A549 (cell line): ENCODE measurements at regions of chr17 and their contacts with region 1.

Region 1: DNA sequence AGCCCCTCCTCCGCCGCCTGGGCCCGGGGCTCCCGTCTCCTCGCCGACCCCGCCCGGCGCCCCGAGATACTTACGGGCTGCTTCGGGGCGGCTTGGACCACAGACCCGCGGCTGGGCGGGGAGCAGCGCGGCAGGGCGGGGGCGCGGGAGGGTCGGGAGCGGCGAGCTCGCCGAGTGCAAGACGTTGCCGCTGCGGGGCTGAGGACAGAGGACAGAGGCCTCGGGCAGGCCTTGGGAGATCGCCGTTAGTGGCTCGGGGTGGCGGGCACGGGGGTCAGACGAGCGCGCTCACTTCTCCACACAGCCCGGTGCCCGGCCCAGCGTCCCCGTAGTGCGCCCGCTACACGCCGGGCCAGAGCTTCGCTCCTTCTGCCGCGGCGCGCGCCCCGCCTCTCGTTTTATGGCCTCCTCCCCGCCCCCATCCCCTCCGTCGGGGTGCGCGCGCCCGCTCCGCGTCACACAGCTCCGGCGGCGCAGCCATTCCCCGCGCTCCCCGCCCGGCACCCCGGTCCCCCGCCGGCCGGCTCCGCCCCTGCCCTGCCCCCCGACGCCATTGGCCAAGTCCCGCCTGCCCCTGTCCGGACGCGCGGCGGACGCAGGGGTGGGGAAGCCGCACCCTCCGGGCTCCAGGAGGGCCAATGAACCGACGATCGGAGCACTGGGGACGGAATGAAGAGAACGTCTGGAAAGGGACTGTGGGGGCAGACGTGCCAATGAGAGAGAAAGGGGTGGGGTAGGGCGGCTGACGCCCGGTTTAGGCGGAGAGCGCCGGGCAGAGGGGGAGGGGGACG is at the start of gene TOB1:
- DNase-seq: peak; percentile 90 to 98
- ATAC-seq: peak; percentile 72 to 86
- H3K4me3 ChIP-seq: peak within 1 kb of the TSS; percentile 92
- H3K27ac ChIP-seq: peak within 1 kb of the TSS; percentile 97 to 98
- H3K4me1 ChIP-seq: peaks cover 36% of the 10 kb centered on the region
- CTCF ChIP-seq: no peak
- EP300 ChIP-seq: 0 out of 5 replicates have a peak, but pooled peaks of 1 of the 2 experiments have one; percentile 36
- POLR2A ChIP-seq: peak; percentile 100
- RAD21 ChIP-seq: peak; percentile 7 to 8; a peak in 3 of 5 replicates
- polyA plus RNA-seq, gene TOB1: 101 and 133 TPM in 2 replicates

Region 2: DNA sequence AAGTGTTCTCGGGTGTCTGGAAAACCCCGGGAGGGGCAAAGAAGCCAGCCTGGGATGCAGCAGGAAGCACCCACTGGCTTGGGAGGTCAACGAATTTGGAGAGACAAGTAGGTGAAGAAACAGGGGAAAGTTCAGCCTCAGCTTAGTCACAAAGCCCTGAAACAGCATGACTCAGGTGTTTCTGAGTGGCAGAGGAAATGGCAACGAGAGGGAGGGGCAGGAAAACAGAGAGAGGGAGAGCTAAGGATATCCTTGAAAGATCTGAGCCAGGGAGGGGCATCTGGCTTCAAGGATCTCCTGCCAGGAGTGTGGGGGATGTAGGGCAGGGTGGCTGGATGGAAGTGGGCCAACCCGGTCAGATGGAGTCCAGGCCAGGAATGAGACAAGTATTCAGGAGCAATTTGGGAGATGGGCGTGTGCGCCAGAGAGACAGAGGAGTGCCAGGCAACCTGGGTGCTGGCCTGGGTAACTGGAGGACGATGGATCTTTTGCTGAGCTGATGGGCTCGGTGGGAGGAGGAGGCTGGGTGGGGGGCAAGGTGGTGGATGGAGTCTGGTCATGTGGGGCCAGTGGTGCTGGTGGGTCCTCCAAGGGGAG is 204.3 kb before region 1 on chr17:
- CTCF ChIA-PET with region 1: no interaction called
- POLR2A ChIA-PET with region 1: interaction called, 10 read pairs
- DNase-seq: peak; percentile 100
- ATAC-seq: peak; percentile 61 to 75
- H3K4me3 ChIP-seq: 0 out of 3 replicates have a peak overlapping the region, but pooled peaks have one; percentile 8
- H3K27ac ChIP-seq: peak overlapping the region; percentile 98
- H3K4me1 ChIP-seq: peaks cover 97% of the 10 kb centered on the region
- CTCF ChIP-seq: no peak
- EP300 ChIP-seq: peak; percentile 96 to 98
- POLR2A ChIP-seq: no peak
- RAD21 ChIP-seq: peak; percentile 21 to 65; a peak in 4 of 5 replicates

Region 3: GRCh38 chr17:50793007-50793406 is 73.2 kb before region 1 on chr17:
- CTCF ChIA-PET with region 1: no interaction called
- POLR2A ChIA-PET with region 1: no interaction called
- DNase-seq: no peak
- ATAC-seq: no peak
- H3K4me3 ChIP-seq: no peak overlapping the region
- H3K27ac ChIP-seq: no peak overlapping the region
- H3K4me1 ChIP-seq: no peaks in the 10 kb centered on the region
- CTCF ChIP-seq: no peak
- EP300 ChIP-seq: no peak
- POLR2A ChIP-seq: no peak
- RAD21 ChIP-seq: no peak

Region 4: GRCh38 chr17:50830994-50831393 is 35.2 kb before region 1 on chr17:
- CTCF ChIA-PET with region 1: no interaction called
- POLR2A ChIA-PET with region 1: no interaction called
- DNase-seq: no peak
- ATAC-seq: no peak
- H3K4me3 ChIP-seq: no peak overlapping the region
- H3K27ac ChIP-seq: no peak overlapping the region
- H3K4me1 ChIP-seq: no peaks in the 10 kb centered on the region
- CTCF ChIP-seq: no peak
- EP300 ChIP-seq: no peak
- POLR2A ChIP-seq: no peak
- RAD21 ChIP-seq: no peak

Region 5: DNA sequence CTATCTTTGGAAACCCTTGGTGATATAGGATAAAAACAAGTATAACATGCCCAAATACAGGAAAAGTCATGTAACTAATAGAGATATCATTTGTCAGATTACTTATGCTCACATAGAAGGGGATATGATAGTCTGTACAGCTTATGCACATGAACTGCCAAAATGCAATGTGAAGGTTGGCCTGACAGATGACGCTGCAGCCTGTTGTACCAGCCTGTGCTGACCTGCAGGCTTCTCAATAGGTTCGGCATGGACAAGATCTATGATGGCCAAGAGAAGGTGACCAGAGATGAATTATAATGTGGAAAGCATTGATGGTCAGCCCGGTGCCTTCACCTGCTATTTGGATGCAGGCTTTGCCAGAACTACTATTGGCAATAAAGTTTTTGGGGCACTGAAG is 18.1 kb before region 1 on chr17:
- CTCF ChIA-PET with region 1: interaction called, 197 read pairs
- POLR2A ChIA-PET with region 1: interaction called, 58 read pairs
- DNase-seq: no peak
- ATAC-seq: no peak
- H3K4me3 ChIP-seq: no peak overlapping the region
- H3K27ac ChIP-seq: no peak overlapping the region
- H3K4me1 ChIP-seq: peaks cover 20% of the 10 kb centered on the region
- CTCF ChIP-seq: no peak
- EP300 ChIP-seq: no peak
- POLR2A ChIP-seq: no peak
- RAD21 ChIP-seq: 0 out of 5 replicates have a peak, but pooled peaks of 1 of the 2 experiments have one; percentile 31

Region 6: DNA sequence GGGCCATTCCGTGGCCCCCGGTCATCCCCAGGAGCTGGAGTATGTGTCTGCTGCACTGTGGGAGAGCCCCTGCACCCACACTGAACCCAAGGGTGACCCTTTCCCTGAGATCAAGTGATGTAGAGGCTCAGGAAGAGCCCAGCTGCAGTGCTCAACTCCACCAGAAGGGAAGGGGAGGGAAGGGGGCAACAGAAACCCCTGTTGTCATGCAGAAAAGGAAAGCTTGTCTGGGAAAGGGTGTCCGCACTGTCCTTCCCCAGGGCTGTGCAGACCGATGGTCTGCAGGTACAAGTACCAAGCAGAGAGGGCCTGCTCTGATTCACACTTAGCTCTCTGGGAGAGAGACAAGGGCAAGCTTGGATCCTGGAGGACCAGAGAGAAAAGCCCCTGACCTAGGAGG is 45.7 kb after region 1 on chr17:
- CTCF ChIA-PET with region 1: interaction called, 4 read pairs
- POLR2A ChIA-PET with region 1: interaction called, 130 read pairs
- DNase-seq: no peak
- ATAC-seq: peak; percentile 24 to 49; a peak in 4 of 6 replicates
- H3K4me3 ChIP-seq: no peak overlapping the region
- H3K27ac ChIP-seq: peak overlapping the region in 1 of 2 experiments; percentile 39; a peak in 3 of 6 replicates
- H3K4me1 ChIP-seq: peaks cover 31% of the 10 kb centered on the region
- CTCF ChIP-seq: no peak
- EP300 ChIP-seq: no peak
- POLR2A ChIP-seq: no peak
- RAD21 ChIP-seq: no peak

Region 7: GRCh38 chr17:50949989-50950881 is 84.1 kb after region 1 on chr17:
- CTCF ChIA-PET with region 1: interaction called, 1,502 read pairs
- POLR2A ChIA-PET with region 1: interaction called, 648 read pairs
- DNase-seq: peak; percentile 95 to 96
- ATAC-seq: peak; percentile 79 to 84
- H3K4me3 ChIP-seq: 0 out of 3 replicates have a peak overlapping the region, but pooled peaks have one; percentile 3
- H3K27ac ChIP-seq: peak overlapping the region; percentile 93 to 98
- H3K4me1 ChIP-seq: peaks cover 77% of the 10 kb centered on the region
- CTCF ChIP-seq: peak; percentile 99
- EP300 ChIP-seq: no peak
- POLR2A ChIP-seq: no peak
- RAD21 ChIP-seq: peak; percentile 100

Region 8: GRCh38 chr17:51153210-51154072 is 287.3 kb after region 1 on chr17 and contains the start of gene NME1:
- CTCF ChIA-PET with region 1: interaction called, 8 read pairs
- POLR2A ChIA-PET with region 1: interaction called, 13 read pairs
- DNase-seq: peak; percentile 99 to 100
- ATAC-seq: peak; percentile 96 to 98
- H3K4me3 ChIP-seq: peak within 1 kb of the TSS; percentile 74
- H3K27ac ChIP-seq: peak within 1 kb of the TSS; percentile 82 to 88
- H3K4me1 ChIP-seq: peaks cover 25% of the 10 kb centered on the region
- CTCF ChIP-seq: peak; percentile 98
- EP300 ChIP-seq: no peak
- POLR2A ChIP-seq: peak; percentile 77
- RAD21 ChIP-seq: peak; percentile 99
- polyA plus RNA-seq, gene NME1: 639 and 782 TPM in 2 replicates